Activated CD4-positive, alpha-beta memory T cell treated with anti-CD3 and anti-CD28 coated beads, Interleukin-2, amount 10 ng/mL, durations not matched to agents 7 days and 5 days (primary cell): ENCODE measurements at regions of chr6 and their contacts with region 1.

Region 1: DNA sequence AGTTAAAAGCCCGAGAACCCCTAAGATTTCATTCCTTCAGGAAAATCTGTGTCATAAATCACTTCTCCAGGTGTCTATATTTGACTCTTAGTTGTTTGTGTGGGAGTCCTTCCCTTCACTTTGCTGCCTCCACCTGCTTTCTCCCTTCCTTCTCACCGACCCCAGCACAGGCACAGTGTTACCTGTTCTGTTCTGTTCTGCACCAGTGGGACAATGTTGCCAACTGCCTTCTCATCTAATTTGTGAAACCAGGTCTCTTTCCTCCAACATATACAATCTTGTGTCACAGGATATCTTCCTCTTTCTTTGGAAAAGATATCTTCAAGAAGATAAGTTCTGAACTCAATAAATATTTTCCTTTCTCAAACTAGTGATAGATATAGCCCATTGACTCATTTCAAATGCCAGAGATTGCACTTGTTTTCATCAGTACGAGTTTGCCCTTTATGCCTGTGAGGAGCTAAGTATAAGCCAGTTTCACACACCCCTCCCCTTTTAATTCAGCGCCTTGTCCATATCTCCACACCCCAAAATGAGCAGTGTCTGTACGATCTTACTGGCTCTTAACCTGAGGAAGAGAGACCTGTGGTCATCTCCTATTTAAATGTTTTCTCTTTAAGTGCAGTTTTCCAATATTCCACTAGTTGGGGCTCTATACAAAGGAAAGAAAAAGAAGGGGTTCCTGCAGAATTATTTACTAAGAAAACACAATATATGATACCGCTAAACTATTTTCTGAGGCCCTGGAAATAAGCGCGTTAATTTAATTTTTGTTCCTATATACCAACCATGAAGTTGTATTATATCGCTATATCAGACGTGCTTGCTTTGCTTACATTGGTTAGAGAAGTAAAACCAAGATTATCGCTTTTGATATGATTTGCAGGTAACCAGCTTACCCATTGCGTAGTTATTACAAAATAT is 81.6 kb upstream of the PREP start:
- DNase-seq: peak; percentile 23
- H3K4me3 Mint-ChIP-seq: peak overlapping the region; percentile 9
- H3K27ac Mint-ChIP-seq: peak overlapping the region; percentile 66
- H3K4me1 Mint-ChIP-seq: peaks cover 76% of the 10 kb centered on the region
- H3K27me3 Mint-ChIP-seq: no peaks in the 10 kb centered on the region

Region 2: GRCh38 chr6:105459049-105459448 is 25.5 kb before region 1 on chr6:
- CTCF ChIA-PET with region 1: interaction called, 4 read pairs
- POLR2A ChIA-PET with region 1: interaction called, 12 read pairs
- DNase-seq: peak; percentile 72
- H3K4me3 Mint-ChIP-seq: peak overlapping the region; percentile 68
- H3K27ac Mint-ChIP-seq: peak overlapping the region; percentile 92
- H3K4me1 Mint-ChIP-seq: peaks cover 60% of the 10 kb centered on the region
- H3K27me3 Mint-ChIP-seq: no peaks in the 10 kb centered on the region

Region 3: DNA sequence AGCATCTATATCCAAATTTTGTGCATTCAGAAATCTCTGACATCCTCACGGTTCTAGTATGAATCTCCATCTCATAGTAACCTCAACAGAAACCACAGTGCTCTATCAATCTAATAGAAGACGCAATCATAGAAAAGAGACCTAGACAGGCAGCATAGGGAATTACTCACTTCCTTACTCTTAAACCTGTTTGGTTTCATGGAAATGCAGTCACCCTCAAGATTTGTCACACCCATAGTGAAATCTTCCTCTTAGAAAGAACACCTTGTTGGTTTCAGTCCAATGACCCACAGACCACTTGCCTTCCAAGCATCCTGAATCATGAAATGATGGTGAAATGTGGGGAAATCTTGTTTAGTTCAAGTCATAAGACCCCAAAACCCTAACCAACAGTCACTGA is 435.6 kb after region 1 on chr6:
- CTCF ChIA-PET with region 1: no interaction called
- POLR2A ChIA-PET with region 1: no interaction called
- DNase-seq: no peak
- H3K4me3 Mint-ChIP-seq: no peak overlapping the region
- H3K27ac Mint-ChIP-seq: peak overlapping the region; percentile 68
- H3K4me1 Mint-ChIP-seq: peaks cover 36% of the 10 kb centered on the region
- H3K27me3 Mint-ChIP-seq: no peaks in the 10 kb centered on the region

Region 4: GRCh38 chr6:106300944-106301343 is 816.4 kb after region 1 on chr6:
- CTCF ChIA-PET with region 1: interaction called, 11 read pairs
- POLR2A ChIA-PET with region 1: no interaction called
- DNase-seq: no peak
- H3K4me3 Mint-ChIP-seq: no peak overlapping the region
- H3K27ac Mint-ChIP-seq: no peak overlapping the region
- H3K4me1 Mint-ChIP-seq: peaks cover 18% of the 10 kb centered on the region
- H3K27me3 Mint-ChIP-seq: no peaks in the 10 kb centered on the region